ENCODE measurements at regions of chr17 and their contacts with region 1.

Region 1: DNA sequence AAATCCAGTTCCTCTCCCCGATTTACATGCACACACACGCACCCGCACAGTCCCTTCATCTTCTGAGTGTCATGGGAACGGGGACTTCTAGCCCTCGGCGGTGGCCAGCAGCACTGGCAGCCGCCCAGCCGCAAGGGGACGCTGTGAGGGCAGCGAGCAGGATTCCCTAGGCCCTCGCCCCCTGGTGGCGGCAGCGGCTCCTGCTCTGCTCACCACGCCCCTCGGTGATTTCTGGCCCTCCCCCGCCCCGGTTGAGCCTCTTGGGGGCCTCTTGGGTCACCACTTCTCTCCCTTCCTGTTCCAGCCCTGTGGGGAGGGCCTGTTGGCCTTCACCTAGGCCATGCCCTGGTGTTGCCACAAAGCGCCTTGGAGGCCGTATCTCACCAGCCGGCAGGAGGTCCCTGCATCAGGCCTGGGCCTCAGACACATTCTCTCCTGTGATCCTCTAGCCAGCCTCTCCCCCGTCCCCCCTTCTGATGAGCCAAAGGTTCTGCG is 75.2 kb upstream of the KSR1 start:
- DNase-seq: peak; percentile 89
- H3K4me3 ChIP-seq: peak overlapping the region; percentile 18 to 31; a peak in 1 of 4 replicates
- H3K27ac ChIP-seq: no peak overlapping the region
- H3K4me1 ChIP-seq: peaks cover 23 to 30% of the 10 kb centered on the region in 2 experiments; a peak in 3 of 4 replicates
- H3K27me3 ChIP-seq: no peaks in the 10 kb centered on the region
- CTCF ChIP-seq: peak; percentile 85
- EP300 ChIP-seq: no peak
- RAD21 ChIP-seq: peak; percentile 57

Region 2: GRCh38 chr17:27353461-27354050 is 27.5 kb before region 1 on chr17:
- CTCF ChIA-PET with region 1: interaction called, 35 read pairs
- POLR2A ChIA-PET with region 1: no interaction called
- DNase-seq: peak; percentile 99
- H3K4me3 ChIP-seq: peak overlapping the region; percentile 65 to 82
- H3K27ac ChIP-seq: peak overlapping the region; percentile 83 to 88
- H3K4me1 ChIP-seq: peaks cover 0 to 11% of the 10 kb centered on the region in 2 experiments; a peak in 1 of 4 replicates
- H3K27me3 ChIP-seq: no peaks in the 10 kb centered on the region
- CTCF ChIP-seq: peak; percentile 78
- EP300 ChIP-seq: peak in 1 of 2 experiments; percentile 74; a peak in 1 of 4 replicates
- RAD21 ChIP-seq: peak; percentile 77

Region 3: GRCh38 chr17:27367121-27367991 is 13.7 kb before region 1 on chr17:
- CTCF ChIA-PET with region 1: interaction called, 37 read pairs
- POLR2A ChIA-PET with region 1: no interaction called
- DNase-seq: no peak
- H3K4me3 ChIP-seq: no peak overlapping the region
- H3K27ac ChIP-seq: no peak overlapping the region
- H3K4me1 ChIP-seq: peaks cover 6% of the 10 kb centered on the region in 2 experiments; a peak in 2 of 4 replicates
- H3K27me3 ChIP-seq: no peaks in the 10 kb centered on the region
- CTCF ChIP-seq: no peak
- EP300 ChIP-seq: no peak
- RAD21 ChIP-seq: no peak

Region 4: GRCh38 chr17:27396941-27397340 is 15.9 kb after region 1 on chr17:
- CTCF ChIA-PET with region 1: interaction called, 17 read pairs
- POLR2A ChIA-PET with region 1: no interaction called
- DNase-seq: no peak
- H3K4me3 ChIP-seq: no peak overlapping the region
- H3K27ac ChIP-seq: no peak overlapping the region
- H3K4me1 ChIP-seq: no peaks in the 10 kb centered on the region
- H3K27me3 ChIP-seq: peaks cover 7% of the 10 kb centered on the region; the same call in 1 of the 2 replicates
- CTCF ChIP-seq: no peak
- EP300 ChIP-seq: no peak
- RAD21 ChIP-seq: no peak

Region 5: DNA sequence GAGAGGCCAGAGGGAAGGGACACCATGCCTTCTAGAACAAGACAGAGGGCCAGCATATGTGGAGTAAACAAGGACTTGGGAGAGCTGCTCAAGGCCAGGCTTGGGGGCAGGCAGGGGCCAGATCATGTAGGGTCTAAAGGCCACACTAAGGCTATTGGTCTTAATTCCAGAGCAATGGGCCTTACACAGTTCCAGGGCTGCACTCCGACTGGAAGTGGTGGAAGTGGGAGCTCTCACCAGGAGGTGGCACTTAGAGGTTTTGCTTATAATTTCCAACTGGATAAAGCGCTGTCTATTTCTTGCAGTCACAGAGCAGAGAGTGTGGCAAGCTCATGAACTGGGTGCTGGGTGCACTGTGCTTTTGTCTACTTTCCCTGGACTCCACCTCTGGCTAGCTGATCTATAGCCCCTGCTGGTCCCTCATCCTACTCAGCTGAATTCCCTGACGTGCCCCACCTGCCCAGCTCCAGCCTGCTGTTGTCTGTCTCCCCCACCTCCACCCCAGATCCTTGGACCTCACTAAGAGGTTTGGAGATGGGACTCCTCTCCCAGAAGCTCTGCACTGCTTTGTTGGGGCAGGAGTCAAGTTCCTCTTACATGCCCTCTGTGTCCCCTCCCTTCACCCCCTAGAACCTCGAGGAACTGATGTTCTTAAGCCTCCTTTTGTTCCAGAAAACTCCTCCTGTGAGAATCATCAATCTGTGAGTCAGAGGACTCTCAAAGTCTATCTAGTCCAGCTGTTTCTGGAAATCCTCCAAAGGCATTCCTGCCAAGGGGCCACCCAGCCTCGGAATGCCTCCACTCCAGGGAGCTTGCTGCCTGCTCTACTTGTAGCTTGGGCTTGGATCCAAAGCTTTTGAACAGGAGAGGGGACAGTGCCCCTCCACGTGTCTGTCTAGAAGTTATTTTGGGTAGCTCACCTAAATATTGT is 27.1 kb after region 1 on chr17:
- CTCF ChIA-PET with region 1: interaction called, 15 read pairs
- POLR2A ChIA-PET with region 1: no interaction called
- DNase-seq: no peak
- H3K4me3 ChIP-seq: peak overlapping the region in 1 of 2 experiments; percentile 22; a peak in 1 of 4 replicates
- H3K27ac ChIP-seq: no peak overlapping the region
- H3K4me1 ChIP-seq: peaks cover 0 to 11% of the 10 kb centered on the region in 2 experiments; a peak in 1 of 4 replicates
- H3K27me3 ChIP-seq: no peaks in the 10 kb centered on the region; the same call in 1 of the 2 replicates
- CTCF ChIP-seq: no peak
- EP300 ChIP-seq: no peak
- RAD21 ChIP-seq: no peak

Region 6: GRCh38 chr17:27449541-27449940 is 68.5 kb after region 1 on chr17:
- CTCF ChIA-PET with region 1: interaction called, 11 read pairs
- POLR2A ChIA-PET with region 1: no interaction called
- DNase-seq: no peak
- H3K4me3 ChIP-seq: no peak overlapping the region
- H3K27ac ChIP-seq: no peak overlapping the region
- H3K4me1 ChIP-seq: peaks cover 0 to 2% of the 10 kb centered on the region in 2 experiments; a peak in 2 of 4 replicates
- H3K27me3 ChIP-seq: no peaks in the 10 kb centered on the region
- CTCF ChIP-seq: no peak
- EP300 ChIP-seq: no peak
- RAD21 ChIP-seq: no peak

Region 7: GRCh38 chr17:27481327-27481726 is 100.3 kb after region 1 on chr17:
- CTCF ChIA-PET with region 1: no interaction called
- POLR2A ChIA-PET with region 1: no interaction called
- DNase-seq: no peak
- H3K4me3 ChIP-seq: no peak overlapping the region
- H3K27ac ChIP-seq: no peak overlapping the region
- H3K4me1 ChIP-seq: peaks cover 0 to 4% of the 10 kb centered on the region in 2 experiments; a peak in 1 of 4 replicates
- H3K27me3 ChIP-seq: no peaks in the 10 kb centered on the region
- CTCF ChIP-seq: no peak
- EP300 ChIP-seq: no peak
- RAD21 ChIP-seq: no peak

Region 8: DNA sequence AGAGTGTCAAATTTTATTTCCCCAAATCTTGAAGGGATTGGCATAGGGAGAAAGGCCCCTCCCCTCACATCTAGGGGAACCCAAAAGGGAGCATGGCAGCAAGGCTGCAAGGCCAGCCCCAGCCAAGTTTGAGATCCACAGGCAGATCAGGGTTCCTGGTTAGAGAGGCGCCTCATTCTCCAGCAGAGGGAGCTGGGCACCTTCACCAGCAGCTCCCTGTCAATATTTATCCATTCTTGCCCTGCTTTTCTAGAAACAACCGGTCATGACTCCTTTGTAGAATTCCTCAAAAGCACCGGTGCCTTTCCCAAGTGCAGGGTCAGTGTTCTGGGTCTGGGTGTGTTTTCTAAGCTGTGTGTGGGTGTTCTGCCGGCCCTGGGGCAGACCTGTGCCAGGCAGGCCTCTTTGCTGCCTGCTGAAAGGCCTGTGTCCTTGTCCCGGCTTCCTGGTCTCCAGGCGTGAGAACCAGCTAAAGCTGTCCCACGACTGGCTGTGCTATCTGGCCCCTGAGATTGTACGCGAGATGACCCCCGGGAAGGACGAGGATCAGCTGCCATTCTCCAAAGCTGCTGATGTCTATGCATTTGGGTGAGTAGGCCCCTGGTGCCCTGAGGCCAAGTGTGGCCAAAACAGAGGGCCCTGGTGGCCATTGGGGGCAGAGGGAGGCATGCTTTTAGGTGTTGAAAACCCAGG is 228.7 kb after region 1 on chr17:
- CTCF ChIA-PET with region 1: interaction called, 10 read pairs
- POLR2A ChIA-PET with region 1: no interaction called
- DNase-seq: peak; percentile 61
- H3K4me3 ChIP-seq: no peak overlapping the region
- H3K27ac ChIP-seq: no peak overlapping the region
- H3K4me1 ChIP-seq: no peaks in the 10 kb centered on the region; a peak in 1 of 4 replicates
- H3K27me3 ChIP-seq: no peaks in the 10 kb centered on the region
- CTCF ChIP-seq: peak; percentile 49
- EP300 ChIP-seq: no peak
- RAD21 ChIP-seq: peak; percentile 63